CD8-positive, alpha-beta T cell (primary cell): ENCODE measurements at regions of chr1 and their contacts with region 1.

Region 1: DNA sequence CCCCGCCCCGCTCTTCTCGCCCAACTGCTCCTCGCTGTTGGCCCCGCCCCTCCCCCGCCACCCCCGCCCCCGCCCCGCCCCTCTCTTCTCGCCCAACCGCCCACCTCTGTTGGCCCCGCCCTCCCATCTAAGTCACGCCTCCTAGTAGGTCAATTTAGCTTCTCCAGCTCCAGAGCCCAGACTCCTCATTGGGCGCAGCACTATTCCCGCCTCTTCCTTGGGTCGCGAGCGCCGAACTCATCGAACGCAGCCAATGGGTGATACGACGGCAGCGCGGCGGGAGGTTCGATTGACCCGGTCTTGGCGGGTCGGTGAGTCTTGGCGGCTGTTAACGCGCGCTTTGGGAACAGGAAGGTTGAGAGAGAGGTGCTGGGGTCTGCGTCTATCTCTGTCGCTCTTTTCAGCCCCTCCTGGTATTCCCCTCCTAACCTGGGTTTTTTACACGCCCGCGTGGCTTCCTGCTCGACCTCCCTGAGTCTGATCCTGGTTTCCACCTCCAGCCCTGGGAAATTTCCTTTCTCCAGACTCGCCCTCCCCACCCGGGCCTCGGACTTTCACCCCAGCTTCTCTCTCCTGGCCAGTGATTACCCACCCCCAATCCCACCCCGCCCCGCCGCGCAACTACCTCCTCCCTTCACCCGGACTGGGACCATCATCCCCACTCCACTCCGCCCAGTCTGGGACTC is at the start of gene RAD54L:
- DNase-seq: peak; percentile 90 to 99 (median 95)
- ATAC-seq: peak; percentile 96
- H3K4me3 ChIP-seq: peak within 1 kb of the TSS; percentile 78 to 80
- H3K4me3 Mint-ChIP-seq: peak within 1 kb of the TSS; percentile 87
- H3K27ac ChIP-seq: peak within 1 kb of the TSS; percentile 43 to 64
- H3K27ac Mint-ChIP-seq: peak within 1 kb of the TSS; percentile 84
- H3K4me1 ChIP-seq: peaks cover 10% of the 10 kb centered on the region
- H3K4me1 Mint-ChIP-seq: peaks cover 16% of the 10 kb centered on the region
- H3K27me3 ChIP-seq: no peaks in the 10 kb centered on the region
- H3K27me3 Mint-ChIP-seq: no peaks in the 10 kb centered on the region
- CTCF ChIP-seq: no peak
- total RNA-seq, gene RAD54L: 0.56 to 1.4 TPM

Region 2: DNA sequence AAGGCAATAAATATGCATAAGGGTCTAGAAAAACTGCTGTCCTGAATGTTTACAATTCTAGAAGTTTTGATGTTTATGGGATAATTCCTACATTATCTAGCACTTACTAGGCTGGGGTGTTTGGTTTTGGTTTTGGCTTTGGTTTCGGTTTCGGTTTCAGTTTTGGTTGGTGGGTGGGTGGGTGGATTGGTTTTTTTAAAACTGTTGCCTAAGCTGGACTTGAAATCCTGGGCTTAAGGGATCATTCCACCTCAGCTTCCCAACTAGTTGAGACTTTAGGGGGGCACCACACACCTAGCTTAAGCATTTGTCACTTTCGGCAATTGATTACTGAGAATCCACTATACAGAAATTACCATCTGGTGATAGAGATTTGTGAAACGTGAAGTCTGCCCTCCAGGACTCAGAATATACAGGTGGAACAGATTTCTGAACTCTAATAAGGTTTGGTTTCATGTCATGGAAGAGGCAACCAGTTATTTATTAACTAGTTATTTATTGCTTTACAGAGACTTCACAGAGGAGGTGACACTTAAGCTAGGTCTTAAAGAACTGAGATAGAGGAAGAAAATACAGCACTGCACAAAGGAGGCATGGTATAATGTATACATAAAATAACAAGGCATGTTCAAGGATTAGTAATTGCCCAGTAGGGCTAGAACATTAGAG is 184.8 kb before region 1 on chr1:
- CTCF ChIA-PET with region 1: no interaction called
- POLR2A ChIA-PET with region 1: no interaction called
- intact Hi-C with region 1: no loop called
- DNase-seq: peak in 4 of 9 experiments; percentile 3 to 62 (median 34)
- ATAC-seq: no peak
- H3K4me3 ChIP-seq: no peak overlapping the region
- H3K4me3 Mint-ChIP-seq: peak overlapping the region; percentile 22
- H3K27ac ChIP-seq: no peak overlapping the region
- H3K27ac Mint-ChIP-seq: no peak overlapping the region
- H3K4me1 ChIP-seq: peaks cover 13% of the 10 kb centered on the region
- H3K4me1 Mint-ChIP-seq: peaks cover 19% of the 10 kb centered on the region
- H3K27me3 ChIP-seq: no peaks in the 10 kb centered on the region
- H3K27me3 Mint-ChIP-seq: no peaks in the 10 kb centered on the region
- CTCF ChIP-seq: no peak

Region 3: GRCh38 chr1:46132529-46133180 is 114.9 kb before region 1 on chr1 and contains the start of gene PIK3R3:
- CTCF ChIA-PET with region 1: no interaction called
- POLR2A ChIA-PET with region 1: no interaction called
- intact Hi-C with region 1: loop called in 1 of 2 experiments (anchors 5 kb)
- DNase-seq: peak; percentile 54 to 96 (median 80)
- ATAC-seq: peak; percentile 85
- H3K4me3 ChIP-seq: peak within 1 kb of the TSS; percentile 75 to 91
- H3K4me3 Mint-ChIP-seq: peak within 1 kb of the TSS; percentile 97
- H3K27ac ChIP-seq: peak within 1 kb of the TSS; percentile 49 to 94
- H3K27ac Mint-ChIP-seq: peak within 1 kb of the TSS; percentile 93
- H3K4me1 ChIP-seq: peaks cover 7% of the 10 kb centered on the region
- H3K4me1 Mint-ChIP-seq: peaks cover 24% of the 10 kb centered on the region
- H3K27me3 ChIP-seq: peaks cover 0 to 6% of the 10 kb centered on the region in 2 experiments
- H3K27me3 Mint-ChIP-seq: peaks cover 39% of the 10 kb centered on the region
- CTCF ChIP-seq: no peak
- total RNA-seq, gene PIK3R3: 0.71 to 0.94 TPM

Region 4: GRCh38 chr1:46192171-46192570 is 55.4 kb before region 1 on chr1:
- CTCF ChIA-PET with region 1: no interaction called
- POLR2A ChIA-PET with region 1: no interaction called
- intact Hi-C with region 1: no loop called
- DNase-seq: no peak
- ATAC-seq: no peak
- H3K4me3 ChIP-seq: no peak overlapping the region
- H3K4me3 Mint-ChIP-seq: no peak overlapping the region
- H3K27ac ChIP-seq: no peak overlapping the region
- H3K27ac Mint-ChIP-seq: no peak overlapping the region
- H3K4me1 ChIP-seq: peaks cover 2% of the 10 kb centered on the region
- H3K4me1 Mint-ChIP-seq: peaks cover 13% of the 10 kb centered on the region
- H3K27me3 ChIP-seq: no peaks in the 10 kb centered on the region
- H3K27me3 Mint-ChIP-seq: no peaks in the 10 kb centered on the region
- CTCF ChIP-seq: no peak

Region 5: DNA sequence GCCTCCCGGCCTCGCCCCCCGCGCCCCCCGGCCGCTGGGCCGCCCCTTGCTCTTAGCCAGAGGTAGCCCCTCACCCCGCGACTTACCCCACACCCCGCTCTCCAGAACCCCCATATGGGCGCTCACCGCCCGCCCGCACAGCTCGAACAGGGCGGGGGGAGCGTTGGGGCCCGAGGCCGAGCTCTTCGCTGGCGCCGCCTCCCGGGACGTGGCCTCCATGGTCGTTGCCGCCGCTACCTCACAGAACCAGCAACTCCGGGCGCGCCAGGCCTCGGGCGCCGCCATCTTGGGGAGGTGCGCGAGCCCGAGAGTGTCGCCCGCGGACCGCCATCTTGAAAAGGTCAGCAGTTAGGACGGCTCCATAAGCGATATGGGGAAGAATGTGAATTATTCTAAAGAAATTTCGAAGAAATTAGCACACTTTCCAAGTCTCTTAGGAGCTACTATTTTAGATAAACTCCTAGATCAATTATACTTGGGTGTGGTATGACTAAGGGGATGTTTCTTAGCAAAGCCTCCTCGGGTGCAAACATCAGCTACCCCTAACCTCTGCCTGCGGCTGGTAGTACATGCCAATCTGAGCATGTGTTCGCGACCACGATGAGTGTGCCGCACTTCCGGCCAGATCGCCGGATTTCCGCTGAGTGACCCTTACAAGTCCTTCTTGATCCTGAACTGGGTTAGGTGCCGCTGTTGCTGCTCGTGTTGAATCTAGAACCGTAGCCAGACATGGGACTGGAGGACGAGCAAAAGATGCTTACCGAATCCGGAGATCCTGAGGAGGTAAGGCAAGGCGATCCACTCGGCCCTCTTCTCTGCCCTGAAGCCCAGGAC is 55.7 kb after region 1 on chr1 and contains the starts of genes LRRC41 and UQCRH:
- CTCF ChIA-PET with region 1: interaction called, 4 read pairs
- POLR2A ChIA-PET with region 1: interaction called, 10 read pairs
- intact Hi-C with region 1: loop called in 1 of 2 experiments (anchors 1 kb)
- DNase-seq: peak; percentile 90 to 96 (median 92)
- ATAC-seq: peak; percentile 87
- H3K4me3 ChIP-seq: peak within 1 kb of the TSS; percentile 81 to 88
- H3K4me3 Mint-ChIP-seq: peak within 1 kb of the TSS; percentile 97
- H3K27ac ChIP-seq: peak within 1 kb of the TSS; percentile 84 to 89
- H3K27ac Mint-ChIP-seq: peak within 1 kb of the TSS; percentile 96
- H3K4me1 ChIP-seq: peaks cover 44% of the 10 kb centered on the region
- H3K4me1 Mint-ChIP-seq: peaks cover 55% of the 10 kb centered on the region
- H3K27me3 ChIP-seq: no peaks in the 10 kb centered on the region
- H3K27me3 Mint-ChIP-seq: no peaks in the 10 kb centered on the region
- CTCF ChIP-seq: no peak
- total RNA-seq, gene LRRC41: 25.5 to 27.1 TPM
- total RNA-seq, gene UQCRH: 100 to 118 TPM

Region 6: GRCh38 chr1:46616277-46617107 is 368.9 kb after region 1 on chr1 and contains the start of gene MOB3C:
- CTCF ChIA-PET with region 1: no interaction called
- POLR2A ChIA-PET with region 1: no interaction called
- intact Hi-C with region 1: loop called (anchors 2 to 10 kb)
- DNase-seq: peak in 8 of 9 experiments; percentile 49 to 82 (median 73)
- ATAC-seq: peak; percentile 83
- H3K4me3 ChIP-seq: peak within 1 kb of the TSS; percentile 91 to 96
- H3K4me3 Mint-ChIP-seq: peak within 1 kb of the TSS; percentile 90
- H3K27ac ChIP-seq: peak within 1 kb of the TSS; percentile 88 to 89
- H3K27ac Mint-ChIP-seq: peak within 1 kb of the TSS; percentile 92
- H3K4me1 ChIP-seq: peaks cover 47% of the 10 kb centered on the region
- H3K4me1 Mint-ChIP-seq: peaks cover 51% of the 10 kb centered on the region
- H3K27me3 ChIP-seq: no peaks in the 10 kb centered on the region
- H3K27me3 Mint-ChIP-seq: no peaks in the 10 kb centered on the region
- CTCF ChIP-seq: no peak
- total RNA-seq, gene MOB3C: 8.0 to 8.6 TPM

Region 7: GRCh38 chr1:47313915-47314664 is 1066.5 kb after region 1 on chr1 and contains the start of gene STIL:
- CTCF ChIA-PET with region 1: no interaction called
- POLR2A ChIA-PET with region 1: no interaction called
- intact Hi-C with region 1: loop called in 1 of 2 experiments (anchors 5 kb)
- DNase-seq: peak; percentile 91 to 99 (median 96)
- ATAC-seq: peak; percentile 96
- H3K4me3 ChIP-seq: peak within 1 kb of the TSS; percentile 54 to 81
- H3K4me3 Mint-ChIP-seq: peak within 1 kb of the TSS; percentile 95
- H3K27ac ChIP-seq: peak within 1 kb of the TSS; percentile 56 to 83
- H3K27ac Mint-ChIP-seq: peak within 1 kb of the TSS; percentile 95
- H3K4me1 ChIP-seq: peaks cover 3% of the 10 kb centered on the region
- H3K4me1 Mint-ChIP-seq: peaks cover 13% of the 10 kb centered on the region
- H3K27me3 ChIP-seq: no peaks in the 10 kb centered on the region
- H3K27me3 Mint-ChIP-seq: no peaks in the 10 kb centered on the region
- CTCF ChIP-seq: no peak
- total RNA-seq, gene STIL: 1.4 to 1.8 TPM